Naive thymus-derived CD4-positive, alpha-beta T cell (primary cell): ENCODE measurements at regions of chr13 and their contacts with region 1.

Region 1: GRCh38 chr13:95982144-95982543 is 71.1 kb downstream of the UGGT2 start:
- DNase-seq: no peak
- ATAC-seq: no peak
- H3K4me3 ChIP-seq: no peak overlapping the region
- H3K4me3 Mint-ChIP-seq: no peak overlapping the region
- H3K27ac ChIP-seq: no peak overlapping the region
- H3K27ac Mint-ChIP-seq: no peak overlapping the region
- H3K4me1 ChIP-seq: no peaks in the 10 kb centered on the region
- H3K4me1 Mint-ChIP-seq: no peaks in the 10 kb centered on the region
- H3K27me3 ChIP-seq: no peaks in the 10 kb centered on the region
- H3K27me3 Mint-ChIP-seq: peaks cover 0 to 8% (median 0%) of the 10 kb centered on the region in 5 donors

Region 2: GRCh38 chr13:95624020-95624419 is 358.1 kb before region 1 on chr13:
- CTCF ChIA-PET with region 1: no interaction called
- POLR2A ChIA-PET with region 1: no interaction called
- intact Hi-C with region 1: loop called (anchors 2 to 5 kb)
- DNase-seq: peak in 5 of 9 donors; percentile 18 to 42 (median 29)
- ATAC-seq: peak; percentile 56
- H3K4me3 ChIP-seq: no peak overlapping the region
- H3K4me3 Mint-ChIP-seq: no peak overlapping the region
- H3K27ac ChIP-seq: no peak overlapping the region
- H3K27ac Mint-ChIP-seq: no peak overlapping the region
- H3K4me1 ChIP-seq: no peaks in the 10 kb centered on the region
- H3K4me1 Mint-ChIP-seq: peaks cover 0 to 3% (median 0%) of the 10 kb centered on the region in 7 donors
- H3K27me3 ChIP-seq: no peaks in the 10 kb centered on the region
- H3K27me3 Mint-ChIP-seq: peaks cover 15 to 32% (median 20%) of the 10 kb centered on the region in 5 donors